Cardiac septum (tissue), 1 donor: ENCODE measurements at regions of chr9 and their contacts with region 1.

Region 1: GRCh38 chr9:127899128-127899946 is at the start of gene ST6GALNAC6:
- DNase-seq: peak; percentile 89
- total RNA-seq, gene ST6GALNAC6: 49.4 TPM

Region 2: DNA sequence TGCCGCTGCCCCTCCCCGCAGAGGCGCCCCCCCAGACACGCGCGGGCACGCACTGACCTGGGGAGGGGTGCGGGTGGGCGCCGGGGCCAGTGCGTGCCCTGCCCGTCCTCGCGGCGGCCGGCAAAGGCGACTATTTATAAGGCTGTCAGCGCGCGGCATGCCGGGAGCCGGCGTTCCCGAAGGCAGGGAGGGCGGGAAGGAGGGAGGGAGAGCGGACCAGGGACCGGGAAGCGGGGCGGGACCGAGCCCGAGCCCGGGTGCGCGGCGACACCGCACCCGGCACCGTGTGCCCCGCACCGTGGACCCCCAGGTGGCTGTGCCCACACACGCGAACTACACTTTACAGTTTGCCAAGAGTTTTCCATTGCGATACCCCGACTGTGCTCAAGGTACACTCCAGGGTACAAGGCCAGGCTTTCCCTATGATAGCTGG is 21.8 kb before region 1 on chr9 and contains the start of gene AK1:
- intact Hi-C with region 1: loop called (anchors 2 kb)
- DNase-seq: peak; percentile 93
- total RNA-seq, gene AK1: 484 TPM